Endothelial cell of umbilical vein (primary cell): ENCODE measurements at regions of chr10 and their contacts with region 1.

Region 1: GRCh38 chr10:29857843-29858701 is 201.3 kb downstream of the JCAD start:
- DNase-seq: peak; percentile 92
- H3K4me3 ChIP-seq: no peak overlapping the region
- H3K27ac ChIP-seq: no peak overlapping the region
- H3K4me1 ChIP-seq: peaks cover 21% of the 10 kb centered on the region
- H3K27me3 ChIP-seq: no peaks in the 10 kb centered on the region
- CTCF ChIP-seq: peak; percentile 79 to 86
- POLR2A ChIP-seq: no peak

Region 2: GRCh38 chr10:29535012-29535777 is 322.9 kb before region 1 on chr10:
- CTCF ChIA-PET with region 1: interaction called, 4 read pairs
- POLR2A ChIA-PET with region 1: no interaction called
- dilution Hi-C with region 1: no loop called
- intact Hi-C with region 1: loop called (anchors 5 kb)
- DNase-seq: peak; percentile 55
- H3K4me3 ChIP-seq: no peak overlapping the region
- H3K27ac ChIP-seq: peak overlapping the region; percentile 17
- H3K4me1 ChIP-seq: peaks cover 9% of the 10 kb centered on the region
- H3K27me3 ChIP-seq: no peaks in the 10 kb centered on the region
- CTCF ChIP-seq: peak; percentile 65 to 70
- POLR2A ChIP-seq: no peak

Region 3: DNA sequence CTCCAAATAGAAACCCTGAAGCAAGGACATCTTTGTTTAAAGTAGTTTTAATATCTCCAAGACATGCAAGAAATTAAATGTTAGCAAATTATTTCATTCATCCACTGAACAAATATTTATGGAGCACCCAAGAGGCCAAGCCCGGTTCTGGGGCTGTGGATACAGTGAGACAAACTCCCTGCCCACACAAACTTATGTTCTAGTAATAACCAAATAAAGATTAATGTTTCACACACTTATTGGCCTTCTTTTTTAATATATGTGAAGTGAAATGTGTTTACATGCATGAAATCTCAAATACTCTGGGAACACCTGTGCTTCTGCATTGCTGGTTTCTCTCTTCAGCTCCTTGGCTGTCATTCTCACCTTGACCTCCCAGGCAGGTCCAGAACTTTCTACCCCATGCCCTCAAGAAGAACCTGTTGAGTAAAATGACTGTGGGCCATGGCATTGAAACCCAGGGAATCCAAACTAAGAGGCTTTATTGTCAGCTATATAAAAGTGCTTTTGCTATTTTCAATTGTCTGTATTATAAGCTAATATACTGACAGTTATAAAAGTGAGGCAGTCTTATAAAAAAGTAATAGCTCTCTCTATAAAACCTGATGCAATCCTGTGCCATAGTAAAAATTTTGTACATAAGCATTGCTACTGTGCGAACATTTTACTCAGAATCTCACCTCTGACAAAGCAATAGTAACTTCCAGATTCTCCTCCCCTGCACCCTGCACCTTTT is 267.0 kb before region 1 on chr10:
- CTCF ChIA-PET with region 1: interaction called, 4 read pairs
- POLR2A ChIA-PET with region 1: no interaction called
- dilution Hi-C with region 1: no loop called
- intact Hi-C with region 1: loop called (anchors 1 kb)
- DNase-seq: no peak
- H3K4me3 ChIP-seq: no peak overlapping the region
- H3K27ac ChIP-seq: no peak overlapping the region
- H3K4me1 ChIP-seq: peaks cover 23% of the 10 kb centered on the region
- H3K27me3 ChIP-seq: no peaks in the 10 kb centered on the region
- CTCF ChIP-seq: no peak
- POLR2A ChIP-seq: no peak

Region 4: DNA sequence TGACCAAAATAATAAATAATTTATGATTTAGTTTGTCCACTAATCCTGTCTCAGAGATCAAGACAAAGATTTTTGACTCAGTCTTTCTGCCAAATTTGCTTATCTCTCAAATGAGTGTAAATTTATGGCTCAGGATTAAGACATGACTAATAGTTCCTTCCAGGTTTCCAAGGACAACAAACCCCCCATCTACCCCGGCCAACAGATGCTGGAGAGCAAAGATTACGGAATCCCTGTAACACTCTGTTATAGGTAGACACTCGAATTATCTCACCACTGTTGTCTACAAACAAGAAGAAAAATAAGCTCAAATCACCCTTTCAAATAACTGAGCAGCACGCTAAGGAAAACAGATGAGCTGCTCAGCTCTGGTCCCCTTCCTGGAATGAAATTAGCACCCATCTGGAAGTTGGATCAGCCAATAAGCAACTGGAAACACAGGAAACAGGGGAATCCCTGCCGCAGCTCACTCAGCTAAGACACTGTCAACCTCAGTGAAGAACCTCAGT is 166.5 kb before region 1 on chr10:
- CTCF ChIA-PET with region 1: interaction called, 4 read pairs
- POLR2A ChIA-PET with region 1: no interaction called
- dilution Hi-C with region 1: no loop called
- intact Hi-C with region 1: loop called (anchors 5 kb)
- DNase-seq: peak; percentile 97
- H3K4me3 ChIP-seq: peak overlapping the region in 1 of 3 experiments; percentile 57
- H3K27ac ChIP-seq: peak overlapping the region; percentile 100
- H3K4me1 ChIP-seq: peaks cover 49% of the 10 kb centered on the region
- H3K27me3 ChIP-seq: no peaks in the 10 kb centered on the region
- CTCF ChIP-seq: no peak
- POLR2A ChIP-seq: peak; percentile 28

Region 5: GRCh38 chr10:29804025-29804852 is 53.8 kb before region 1 on chr10:
- CTCF ChIA-PET with region 1: interaction called, 6 read pairs
- POLR2A ChIA-PET with region 1: no interaction called
- dilution Hi-C with region 1: no loop called
- intact Hi-C with region 1: loop called (anchors 1 kb)
- DNase-seq: peak; percentile 99
- H3K4me3 ChIP-seq: peak overlapping the region in 1 of 3 experiments; percentile 31
- H3K27ac ChIP-seq: peak overlapping the region; percentile 99
- H3K4me1 ChIP-seq: peaks cover 54% of the 10 kb centered on the region
- H3K27me3 ChIP-seq: no peaks in the 10 kb centered on the region
- CTCF ChIP-seq: no peak
- POLR2A ChIP-seq: no peak

Region 6: GRCh38 chr10:29895456-29895855 is 37.4 kb after region 1 on chr10:
- CTCF ChIA-PET with region 1: interaction called, 7 read pairs
- POLR2A ChIA-PET with region 1: no interaction called
- dilution Hi-C with region 1: no loop called
- intact Hi-C with region 1: loop called (anchors 1 kb)
- DNase-seq: peak; percentile 98
- H3K4me3 ChIP-seq: peak overlapping the region in 1 of 3 experiments; percentile 19
- H3K27ac ChIP-seq: peak overlapping the region; percentile 83
- H3K4me1 ChIP-seq: peaks cover 14% of the 10 kb centered on the region
- H3K27me3 ChIP-seq: no peaks in the 10 kb centered on the region
- CTCF ChIP-seq: no peak
- POLR2A ChIP-seq: peak; percentile 35